ENCODE measurements at regions of chrX and their contacts with region 1.

Region 1: GRCh38 chrX:155056877-155057792 is 13.8 kb downstream of the CMC4 start:
- DNase-seq: peak; percentile 62
- H3K4me3 Mint-ChIP-seq: peak overlapping the region; percentile 12
- H3K27ac Mint-ChIP-seq: peak overlapping the region; percentile 60
- H3K4me1 Mint-ChIP-seq: peaks cover 18% of the 10 kb centered on the region
- H3K27me3 Mint-ChIP-seq: no peaks in the 10 kb centered on the region

Region 2: DNA sequence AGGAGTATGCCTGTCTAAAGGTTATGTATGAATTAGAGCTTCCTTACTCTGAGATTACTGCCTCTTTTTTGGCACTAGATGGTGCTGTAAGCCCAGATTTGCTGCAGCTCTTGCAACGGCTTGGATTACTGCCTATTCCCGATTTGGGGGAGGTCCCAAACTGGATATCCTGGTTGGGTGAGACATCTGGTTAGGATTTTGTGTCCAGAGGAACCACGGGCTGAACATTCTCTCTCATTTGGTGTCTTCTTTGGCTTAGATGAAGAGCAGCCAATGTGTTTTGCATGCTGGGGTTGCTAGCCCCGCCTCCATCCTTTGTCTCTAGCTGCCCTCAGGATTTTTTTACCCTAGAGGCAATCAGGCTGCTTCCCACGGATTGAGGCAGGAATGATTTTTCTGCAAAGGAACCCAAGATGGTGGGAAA is 139.1 kb before region 1 on chrX:
- CTCF ChIA-PET with region 1: interaction called, 14 read pairs
- POLR2A ChIA-PET with region 1: no interaction called
- intact Hi-C with region 1: no loop called
- DNase-seq: peak; percentile 20
- H3K4me3 Mint-ChIP-seq: peak overlapping the region; percentile 54
- H3K27ac Mint-ChIP-seq: no peak overlapping the region
- H3K4me1 Mint-ChIP-seq: peaks cover 1% of the 10 kb centered on the region
- H3K27me3 Mint-ChIP-seq: peaks cover 2% of the 10 kb centered on the region

Region 3: GRCh38 chrX:154986826-154987576 is 70.1 kb before region 1 on chrX:
- CTCF ChIA-PET with region 1: interaction called, 35 read pairs
- POLR2A ChIA-PET with region 1: interaction called, 3 read pairs
- intact Hi-C with region 1: no loop called
- DNase-seq: no peak
- H3K4me3 Mint-ChIP-seq: no peak overlapping the region
- H3K27ac Mint-ChIP-seq: no peak overlapping the region
- H3K4me1 Mint-ChIP-seq: peaks cover 20% of the 10 kb centered on the region
- H3K27me3 Mint-ChIP-seq: no peaks in the 10 kb centered on the region

Region 4: DNA sequence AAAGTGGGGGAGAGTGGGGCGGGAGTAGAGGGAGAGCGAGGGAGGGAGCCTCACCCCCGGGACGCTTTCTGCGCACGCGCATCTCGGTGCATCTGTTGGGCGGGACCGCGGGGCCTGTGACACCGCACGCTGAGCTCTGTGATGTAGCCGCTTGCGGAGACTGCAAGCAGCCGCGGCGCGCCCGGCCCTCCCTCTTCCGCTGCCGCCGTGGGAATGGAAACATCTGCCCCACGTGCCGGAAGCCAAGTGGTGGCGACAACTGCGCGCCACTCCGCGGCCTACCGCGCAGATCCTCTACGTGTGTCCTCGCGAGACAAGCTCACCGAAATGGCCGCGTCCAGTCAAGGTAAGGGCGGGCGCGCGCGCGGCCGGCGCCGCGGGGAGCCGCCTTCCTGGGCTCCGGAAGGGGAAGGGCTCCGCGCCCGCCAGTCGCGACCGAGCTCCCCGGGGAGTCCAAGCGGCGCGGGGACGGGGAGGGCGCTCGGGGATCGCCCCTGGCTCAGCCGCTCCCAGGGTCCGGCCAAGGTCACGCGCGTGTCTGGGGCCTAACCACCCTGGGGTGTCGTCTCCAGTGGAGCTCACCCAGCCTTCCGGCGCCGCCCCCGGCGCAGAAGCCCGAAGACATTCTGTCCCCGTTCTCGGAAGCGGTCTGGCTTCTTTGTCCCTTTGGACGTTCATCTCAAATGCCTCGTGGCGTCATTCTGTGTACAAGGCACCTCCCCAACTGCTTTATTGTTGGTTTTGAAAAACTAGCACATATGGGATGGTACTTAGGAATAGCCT is 30.2 kb before region 1 on chrX and contains the start of gene FUNDC2:
- CTCF ChIA-PET with region 1: interaction called, 12 read pairs
- POLR2A ChIA-PET with region 1: no interaction called
- intact Hi-C with region 1: no loop called
- DNase-seq: peak; percentile 96
- H3K4me3 Mint-ChIP-seq: peak within 1 kb of the TSS; percentile 83
- H3K27ac Mint-ChIP-seq: peak within 1 kb of the TSS; percentile 94
- H3K4me1 Mint-ChIP-seq: peaks cover 21% of the 10 kb centered on the region
- H3K27me3 Mint-ChIP-seq: no peaks in the 10 kb centered on the region
- total RNA-seq, gene FUNDC2: 95.1 to 95.9 TPM

Region 5: DNA sequence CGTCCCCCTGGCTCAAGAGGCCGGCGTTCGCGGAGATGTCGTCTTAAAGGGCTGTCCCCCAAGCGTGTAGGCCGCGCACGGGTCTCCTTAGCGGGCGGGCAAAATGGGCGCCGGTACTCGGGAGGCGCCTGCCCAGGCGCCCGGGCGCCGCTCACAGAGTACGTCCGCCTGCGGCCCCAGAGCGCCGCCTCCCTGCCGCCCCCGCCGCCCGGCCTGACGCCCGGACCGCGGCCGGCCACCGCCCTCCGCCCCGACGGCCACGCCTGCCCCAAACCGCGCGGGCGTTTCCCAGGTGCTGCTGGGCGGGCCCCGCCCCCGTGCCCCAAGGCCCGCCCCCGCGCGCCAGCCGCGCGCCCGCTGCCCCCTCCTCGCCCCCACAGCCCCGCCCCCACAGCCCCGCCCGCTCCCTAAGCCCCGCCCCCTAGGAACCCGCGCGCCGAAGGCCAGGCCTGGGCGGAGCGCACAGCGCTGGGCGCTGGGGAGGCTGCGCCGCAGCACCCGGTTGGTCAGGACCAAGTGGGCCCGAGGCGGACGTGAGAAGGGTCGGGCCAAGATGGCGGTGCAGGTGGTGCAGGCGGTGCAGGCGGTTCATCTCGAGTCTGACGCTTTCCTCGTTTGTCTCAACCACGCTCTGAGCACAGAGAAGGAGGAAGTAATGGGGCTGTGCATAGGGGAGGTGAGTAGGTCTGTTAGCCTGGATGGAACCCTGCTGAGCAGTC is 14.0 kb after region 1 on chrX and contains the starts of genes BRCC3, CMC4 and MTCP1:
- CTCF ChIA-PET with region 1: interaction called, 12 read pairs
- POLR2A ChIA-PET with region 1: no interaction called
- intact Hi-C with region 1: loop called (anchors 2 kb)
- DNase-seq: peak; percentile 86
- H3K4me3 Mint-ChIP-seq: peak within 1 kb of the TSS; percentile 91
- H3K27ac Mint-ChIP-seq: peak within 1 kb of the TSS; percentile 90
- H3K4me1 Mint-ChIP-seq: peaks cover 51% of the 10 kb centered on the region
- H3K27me3 Mint-ChIP-seq: no peaks in the 10 kb centered on the region
- total RNA-seq, gene BRCC3: 24.4 to 26.7 TPM
- total RNA-seq, gene CMC4: 4.9 to 7.2 TPM
- total RNA-seq, gene MTCP1: 16.2 to 19.2 TPM